ENCODE measurements at regions of chr5 and their contacts with region 1.

Region 1: DNA sequence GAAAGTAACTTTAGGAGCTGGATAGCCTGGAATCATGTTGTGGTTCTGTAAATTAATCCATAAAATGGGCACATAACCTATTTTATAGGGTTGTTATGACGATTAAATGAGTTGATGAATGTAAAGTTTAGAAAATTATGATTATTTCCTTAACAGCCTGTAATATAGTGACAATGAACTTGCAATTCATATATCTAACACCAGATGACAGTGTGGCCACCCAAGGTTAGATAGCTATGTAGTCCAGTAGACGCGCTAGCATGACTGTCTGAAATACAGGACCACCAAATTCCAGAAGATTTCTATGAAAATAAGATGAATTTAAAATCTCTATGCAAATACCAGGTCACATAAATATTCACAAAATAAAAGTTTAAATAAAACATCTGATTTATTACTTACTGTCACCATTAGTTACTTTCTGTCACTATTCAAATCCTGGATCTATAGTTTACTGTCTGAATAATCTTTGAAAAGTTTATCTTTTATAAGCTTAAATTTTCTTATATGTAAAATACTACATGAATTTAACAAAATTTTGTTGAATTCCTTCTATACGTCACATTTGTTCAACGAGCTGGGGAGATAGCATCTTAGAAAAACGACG is 26.1 kb upstream of the MACIR start:
- DNase-seq: no peak
- ATAC-seq: peak in 3 of 4 donors; percentile 76 to 80 (median 79)
- H3K4me3 ChIP-seq: no peak overlapping the region
- H3K27ac ChIP-seq: no peak overlapping the region
- H3K4me1 ChIP-seq: no peaks in the 10 kb centered on the region
- H3K27me3 ChIP-seq: no peaks in the 10 kb centered on the region
- CTCF ChIP-seq: peak; percentile 78 to 94 (median 86)
- POLR2A ChIP-seq: no peak

Region 2: GRCh38 chr5:103098993-103099392 is 133.5 kb before region 1 on chr5:
- intact Hi-C with region 1: no loop called
- DNase-seq: no peak
- ATAC-seq: no peak
- H3K4me3 ChIP-seq: no peak overlapping the region
- H3K27ac ChIP-seq: no peak overlapping the region
- H3K4me1 ChIP-seq: peaks cover 0 to 6% (median 0%) of the 10 kb centered on the region in 12 donors
- H3K27me3 ChIP-seq: no peaks in the 10 kb centered on the region
- CTCF ChIP-seq: no peak
- POLR2A ChIP-seq: no peak

Region 3: DNA sequence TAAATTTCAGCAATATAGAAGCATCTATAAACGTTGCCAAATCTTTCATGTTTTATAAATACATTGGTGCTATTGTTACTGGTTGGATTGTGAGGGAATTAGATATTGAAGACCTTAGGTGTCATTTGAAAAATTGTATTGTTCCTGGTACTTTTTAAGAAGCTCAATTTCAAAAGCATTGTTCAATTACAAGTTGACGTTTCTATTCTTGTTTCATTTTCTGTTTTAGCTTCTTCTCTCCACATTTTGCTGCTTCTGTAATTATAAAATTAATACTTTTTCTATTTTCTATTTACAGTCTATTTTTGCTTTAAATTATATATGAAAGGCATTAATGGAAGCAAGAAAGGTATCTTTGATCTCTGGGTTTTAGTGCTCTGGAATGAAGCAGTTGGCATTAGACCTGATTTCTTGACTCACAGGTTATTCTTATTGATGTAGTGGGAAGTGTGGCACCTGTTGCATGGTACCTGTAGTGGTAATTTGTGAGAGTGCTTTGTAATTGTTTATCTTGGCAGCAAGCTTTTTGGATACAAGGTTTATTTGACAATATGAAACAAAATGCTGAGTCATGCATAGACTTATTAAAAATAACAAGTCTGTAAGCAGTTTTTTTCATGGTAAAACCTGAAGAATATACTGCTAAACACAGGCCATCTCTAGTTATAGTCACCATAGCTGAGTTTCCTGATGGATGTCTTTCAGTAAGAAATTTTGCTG is 39.2 kb after region 1 on chr5:
- intact Hi-C with region 1: no loop called
- DNase-seq: no peak
- ATAC-seq: no peak
- H3K4me3 ChIP-seq: peak overlapping the region in 1 of 12 donors; percentile 4
- H3K27ac ChIP-seq: no peak overlapping the region
- H3K4me1 ChIP-seq: peaks cover 0 to 27% (median 16%) of the 10 kb centered on the region in 12 donors
- H3K27me3 ChIP-seq: no peaks in the 10 kb centered on the region
- CTCF ChIP-seq: no peak
- POLR2A ChIP-seq: no peak

Region 4: DNA sequence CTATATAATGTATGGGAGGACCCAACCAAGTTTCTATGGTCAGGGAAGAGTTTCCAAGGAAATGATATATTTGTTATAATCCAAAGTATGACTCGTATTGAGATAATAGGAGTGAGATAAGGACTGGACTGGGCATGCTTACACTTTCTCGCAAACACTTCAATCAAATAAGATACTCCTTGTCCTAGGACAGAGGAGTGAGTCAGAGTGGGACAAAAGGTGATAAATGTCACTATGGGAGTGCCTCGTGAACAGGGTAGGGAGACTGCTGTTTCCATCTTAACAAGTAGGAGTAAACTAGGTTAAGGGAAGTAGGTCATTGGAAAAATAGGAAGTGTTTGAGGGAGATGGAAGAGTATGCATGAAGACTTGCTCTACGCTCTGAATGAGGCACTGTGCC is 73.3 kb after region 1 on chr5:
- intact Hi-C with region 1: loop called in 1 of 10 experiments (anchors 5 kb)
- DNase-seq: no peak
- ATAC-seq: no peak
- H3K4me3 ChIP-seq: no peak overlapping the region
- H3K27ac ChIP-seq: no peak overlapping the region
- H3K4me1 ChIP-seq: no peaks in the 10 kb centered on the region
- H3K27me3 ChIP-seq: no peaks in the 10 kb centered on the region
- CTCF ChIP-seq: no peak
- POLR2A ChIP-seq: no peak

Measured in heart left ventricle (tissue), 16 donors.